ENCODE measurements at regions of chr12 and their contacts with region 1.

Region 1: GRCh38 chr12:104347374-104348075 is 44.0 kb downstream of the EID3 start:
- DNase-seq: no peak

Region 2: GRCh38 chr12:104314242-104314614 is 33.3 kb before region 1 on chr12:
- in situ Hi-C with region 1: loop called (anchors 5 kb)
- DNase-seq: no peak

Measured in ACHN (cell line).